ENCODE measurements at regions of chr16 and their contacts with region 1.

Region 1: DNA sequence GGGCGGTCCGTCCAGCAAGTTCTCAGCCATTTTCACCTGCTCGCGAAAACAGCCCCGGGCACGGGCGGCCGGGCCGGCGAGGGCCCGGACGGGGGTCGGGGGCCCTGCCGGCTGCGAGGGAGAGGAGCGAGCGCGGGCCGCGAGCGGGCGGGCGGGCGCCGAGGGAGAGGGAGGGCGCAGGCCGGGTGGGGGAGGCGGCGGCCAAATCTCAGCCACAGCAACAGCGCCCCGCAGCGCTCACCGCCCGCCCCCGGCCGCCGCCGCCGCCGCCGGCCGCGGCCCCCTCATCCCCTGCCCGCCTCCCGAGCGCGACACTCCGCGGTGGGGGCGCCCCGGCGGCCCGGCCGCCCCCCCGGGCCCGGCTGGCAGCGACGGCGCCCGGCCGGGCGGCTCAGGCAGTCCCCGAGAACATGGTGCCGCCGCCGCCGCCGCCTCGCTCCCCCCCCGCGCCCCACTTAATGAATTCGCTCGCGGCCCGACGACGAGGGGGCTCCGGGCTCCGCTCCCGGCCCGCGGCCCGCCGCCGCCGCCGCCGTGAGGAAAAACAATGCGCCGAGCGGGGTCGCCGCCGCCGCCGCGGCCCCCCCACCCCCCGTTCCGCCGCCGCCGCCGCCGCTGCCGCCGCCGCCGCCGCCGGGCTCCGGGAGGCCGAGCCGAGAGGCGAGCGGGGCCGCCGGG is 487 bp downstream of the CREBBP start:
- DNase-seq: peak; percentile 88
- ATAC-seq: peak; percentile 74

Region 2: GRCh38 chr16:3264137-3265036 is 615.6 kb before region 1 on chr16:
- intact Hi-C with region 1: no loop called
- DNase-seq: peak; percentile 97
- ATAC-seq: peak; percentile 96

Region 3: GRCh38 chr16:3364774-3365427 is 515.1 kb before region 1 on chr16:
- intact Hi-C with region 1: no loop called
- DNase-seq: peak; percentile 90
- ATAC-seq: peak; percentile 100

Region 4: DNA sequence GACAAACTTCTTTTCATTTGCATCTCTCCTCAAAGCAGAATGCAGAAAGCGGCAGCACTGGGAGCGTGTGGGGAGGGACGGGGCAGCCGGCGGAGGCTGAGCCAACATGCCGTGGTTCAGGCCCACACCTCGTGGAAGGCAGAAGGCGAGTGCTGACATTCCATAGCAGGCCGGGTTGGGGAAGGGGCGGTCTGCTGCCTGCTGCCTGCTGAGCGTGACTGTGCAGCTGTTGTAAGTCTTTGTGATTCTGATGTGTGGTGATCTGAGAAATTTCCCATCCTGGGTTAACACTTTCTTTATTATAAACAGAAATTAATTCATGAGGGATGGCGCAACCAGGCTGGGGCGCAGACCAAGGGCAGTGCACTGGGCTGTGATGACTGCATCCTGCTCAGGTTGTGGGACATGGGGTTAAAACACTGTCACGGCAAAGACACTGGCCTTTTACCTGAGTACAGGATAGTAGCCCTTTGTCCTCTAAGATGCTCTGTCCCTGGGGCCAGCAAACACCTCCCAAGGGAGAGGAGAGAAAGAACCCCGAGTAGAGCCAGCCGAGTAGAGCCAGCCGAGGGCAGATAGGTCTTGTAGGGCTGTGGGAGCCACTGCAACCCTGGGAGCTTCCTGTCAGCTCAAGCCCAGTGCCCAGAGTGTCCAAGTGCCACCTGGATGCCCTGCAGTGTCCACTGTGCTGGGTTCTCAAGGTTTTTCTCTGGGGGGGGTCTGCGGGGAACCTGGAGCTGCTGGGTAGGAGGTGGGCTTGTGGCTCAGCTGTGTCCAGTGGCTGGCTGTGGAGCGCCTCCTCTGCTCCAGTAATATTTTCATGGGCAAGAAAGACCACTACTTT is 234.3 kb before region 1 on chr16:
- intact Hi-C with region 1: no loop called
- DNase-seq: no peak
- ATAC-seq: peak; percentile 38

Region 5: DNA sequence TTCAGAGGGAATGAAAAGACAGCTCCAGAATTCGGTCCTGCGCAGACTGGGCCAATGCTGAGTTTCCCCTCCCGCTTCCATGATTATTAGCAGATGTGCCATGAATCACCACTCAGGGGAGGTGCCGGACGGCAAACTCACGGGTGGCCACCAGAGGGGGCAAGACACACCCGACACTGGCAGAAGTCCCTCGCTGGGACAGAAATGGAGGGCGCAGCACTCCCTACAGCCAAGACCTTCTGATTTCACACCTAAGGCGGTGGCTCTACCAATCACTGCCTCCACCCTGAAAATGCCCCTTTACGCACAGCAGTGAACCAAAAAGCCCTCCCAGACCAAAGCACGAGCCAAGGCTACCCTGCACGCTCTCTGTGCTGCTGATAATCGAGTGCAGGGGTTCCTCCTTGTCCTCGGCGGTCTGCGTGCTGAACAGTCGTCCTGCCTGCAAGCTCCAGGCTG is 189.5 kb before region 1 on chr16:
- intact Hi-C with region 1: loop called (anchors 5 kb)
- DNase-seq: peak; percentile 95
- ATAC-seq: peak; percentile 97

Region 6: DNA sequence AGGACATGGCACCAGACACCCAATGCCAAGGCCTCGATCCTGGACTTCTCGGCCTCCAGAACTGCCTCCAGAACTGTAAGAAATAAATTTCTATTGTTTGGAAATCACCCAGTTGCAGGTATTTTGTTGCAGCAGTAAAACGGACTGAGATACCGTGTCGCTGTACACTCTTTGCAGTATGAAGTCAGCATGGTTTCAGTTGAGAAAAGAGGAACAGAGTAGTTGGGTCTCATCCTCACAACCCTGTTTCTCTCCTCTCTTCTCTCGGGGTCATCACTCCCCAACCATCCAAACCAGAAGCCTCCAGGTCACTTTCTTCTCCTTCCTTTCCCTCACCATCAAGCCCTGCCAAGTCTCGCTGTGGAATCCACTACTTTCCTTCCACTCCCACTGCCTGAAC is 158.4 kb after region 1 on chr16:
- intact Hi-C with region 1: no loop called
- DNase-seq: peak; percentile 26
- ATAC-seq: no peak

Measured in sciatic nerve (tissue), 2 donors.